ENCODE measurements at regions of chr20 and their contacts with region 1.

Region 1: GRCh38 chr20:54475334-54476168 is at the start of gene DOK5:
- DNase-seq: peak; percentile 53 to 72
- ATAC-seq: peak; percentile 74 to 90 (median 84)
- H3K4me3 ChIP-seq: peak within 1 kb of the TSS; percentile 79
- H3K27ac ChIP-seq: peak within 1 kb of the TSS; percentile 81
- H3K4me1 ChIP-seq: peaks cover 3% of the 10 kb centered on the region
- H3K27me3 ChIP-seq: no peaks in the 10 kb centered on the region
- CTCF ChIP-seq: no peak
- total RNA-seq, gene DOK5: 11.7 to 25.5 (median 14.5) TPM

Region 2: GRCh38 chr20:53957451-53958172 is 517.9 kb before region 1 on chr20:
- intact Hi-C with region 1: no loop called
- DNase-seq: no peak
- ATAC-seq: no peak
- H3K4me3 ChIP-seq: no peak overlapping the region
- H3K27ac ChIP-seq: no peak overlapping the region
- H3K4me1 ChIP-seq: no peaks in the 10 kb centered on the region
- H3K27me3 ChIP-seq: peaks cover 0 to 3% (median 0%) of the 10 kb centered on the region in 3 donors
- CTCF ChIP-seq: no peak

Region 3: DNA sequence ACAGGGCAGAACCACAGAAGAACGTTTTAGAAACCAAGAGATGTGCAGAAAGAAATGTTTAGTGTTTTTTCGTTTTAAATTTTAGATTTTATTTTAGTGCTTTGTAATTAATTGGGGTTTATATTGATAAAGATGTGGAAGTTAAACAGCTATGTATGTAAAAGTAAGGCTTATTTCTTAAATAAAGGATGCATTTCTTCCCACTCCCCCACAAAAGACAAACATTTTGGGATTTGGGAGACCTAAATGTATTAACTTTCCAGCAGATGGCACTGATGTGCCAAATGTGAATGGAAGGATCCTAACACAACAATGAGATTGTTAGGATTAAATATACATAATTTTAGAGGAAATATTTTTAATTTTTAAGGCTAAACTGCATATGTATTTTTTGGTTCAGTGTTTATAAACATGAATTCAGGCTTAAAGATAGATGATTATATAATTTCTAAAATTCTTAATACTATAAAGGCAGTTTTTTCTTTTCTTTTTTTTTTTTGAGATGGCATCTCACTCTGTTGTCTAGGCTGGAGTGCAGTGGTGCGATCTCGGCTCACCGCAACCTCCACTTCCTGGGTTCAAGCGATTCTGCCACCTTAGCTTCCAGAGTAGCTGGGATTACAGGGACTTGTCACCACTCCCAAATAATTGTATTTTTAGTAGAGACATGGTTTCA is 255.7 kb before region 1 on chr20:
- intact Hi-C with region 1: loop called in 1 of 2 experiments (anchors 10 kb)
- DNase-seq: no peak
- ATAC-seq: no peak
- H3K4me3 ChIP-seq: no peak overlapping the region
- H3K27ac ChIP-seq: no peak overlapping the region
- H3K4me1 ChIP-seq: peaks cover 30% of the 10 kb centered on the region
- H3K27me3 ChIP-seq: no peaks in the 10 kb centered on the region
- CTCF ChIP-seq: peak; percentile 51

Region 4: DNA sequence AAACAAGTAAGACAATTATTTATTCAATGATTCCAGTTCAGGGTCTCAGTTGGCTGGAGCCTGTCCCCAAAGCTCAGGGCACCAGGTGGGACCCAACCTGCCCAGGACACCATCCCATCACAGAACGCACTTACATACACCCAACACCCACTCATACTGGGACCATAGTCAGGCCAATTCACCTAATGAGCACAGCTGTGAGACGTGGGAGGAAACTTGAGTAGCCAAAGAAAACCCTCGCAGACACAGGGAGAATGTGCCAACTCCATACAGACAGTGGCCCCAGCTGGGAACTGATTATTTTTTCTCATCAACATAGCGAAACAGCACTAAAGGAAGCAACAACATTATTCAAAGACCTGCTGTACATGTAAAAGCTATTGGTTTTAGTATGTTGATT is 58.8 kb before region 1 on chr20:
- intact Hi-C with region 1: no loop called
- DNase-seq: no peak
- ATAC-seq: no peak
- H3K4me3 ChIP-seq: no peak overlapping the region
- H3K27ac ChIP-seq: no peak overlapping the region
- H3K4me1 ChIP-seq: no peaks in the 10 kb centered on the region
- H3K27me3 ChIP-seq: peaks cover 0 to 2% (median 0%) of the 10 kb centered on the region in 3 donors
- CTCF ChIP-seq: no peak

Region 5: DNA sequence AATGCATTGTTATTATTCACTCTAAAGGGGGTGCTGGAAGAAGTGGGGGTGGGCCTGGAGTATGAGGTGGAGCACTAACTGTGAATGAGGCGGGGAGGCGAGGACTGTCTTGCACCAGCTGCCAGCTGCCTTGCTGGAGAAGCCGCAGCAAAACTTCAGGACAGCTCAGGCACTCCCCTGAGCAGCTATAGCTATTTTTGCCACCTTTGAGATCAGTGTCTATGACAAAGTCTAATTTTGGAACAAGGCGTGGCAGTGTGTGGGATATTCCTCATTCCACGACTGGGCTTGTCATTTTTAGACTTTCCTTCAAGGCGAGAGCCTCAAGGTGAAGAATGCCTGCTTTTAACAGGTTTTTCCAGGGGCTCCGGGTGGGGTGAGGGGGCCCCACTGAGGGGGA is 143.6 kb after region 1 on chr20:
- intact Hi-C with region 1: loop called in 1 of 2 experiments (anchors 5 kb)
- DNase-seq: peak in 1 of 2 donors; percentile 71
- ATAC-seq: peak; percentile 90 to 98 (median 95)
- H3K4me3 ChIP-seq: peak overlapping the region; percentile 41
- H3K27ac ChIP-seq: peak overlapping the region; percentile 78
- H3K4me1 ChIP-seq: peaks cover 12% of the 10 kb centered on the region
- H3K27me3 ChIP-seq: no peaks in the 10 kb centered on the region
- CTCF ChIP-seq: no peak

Measured in psoas muscle (tissue), 8 donors.